ENCODE measurements at regions of chr22 and their contacts with region 1.

Region 1: GRCh38 chr22:46122511-46122971 is 27.8 kb upstream of the PPARA start:
- DNase-seq: peak; percentile 80
- H3K4me3 Mint-ChIP-seq: no peak overlapping the region
- H3K27ac Mint-ChIP-seq: no peak overlapping the region
- H3K4me1 Mint-ChIP-seq: no peaks in the 10 kb centered on the region
- H3K27me3 Mint-ChIP-seq: no peaks in the 10 kb centered on the region

Region 2: DNA sequence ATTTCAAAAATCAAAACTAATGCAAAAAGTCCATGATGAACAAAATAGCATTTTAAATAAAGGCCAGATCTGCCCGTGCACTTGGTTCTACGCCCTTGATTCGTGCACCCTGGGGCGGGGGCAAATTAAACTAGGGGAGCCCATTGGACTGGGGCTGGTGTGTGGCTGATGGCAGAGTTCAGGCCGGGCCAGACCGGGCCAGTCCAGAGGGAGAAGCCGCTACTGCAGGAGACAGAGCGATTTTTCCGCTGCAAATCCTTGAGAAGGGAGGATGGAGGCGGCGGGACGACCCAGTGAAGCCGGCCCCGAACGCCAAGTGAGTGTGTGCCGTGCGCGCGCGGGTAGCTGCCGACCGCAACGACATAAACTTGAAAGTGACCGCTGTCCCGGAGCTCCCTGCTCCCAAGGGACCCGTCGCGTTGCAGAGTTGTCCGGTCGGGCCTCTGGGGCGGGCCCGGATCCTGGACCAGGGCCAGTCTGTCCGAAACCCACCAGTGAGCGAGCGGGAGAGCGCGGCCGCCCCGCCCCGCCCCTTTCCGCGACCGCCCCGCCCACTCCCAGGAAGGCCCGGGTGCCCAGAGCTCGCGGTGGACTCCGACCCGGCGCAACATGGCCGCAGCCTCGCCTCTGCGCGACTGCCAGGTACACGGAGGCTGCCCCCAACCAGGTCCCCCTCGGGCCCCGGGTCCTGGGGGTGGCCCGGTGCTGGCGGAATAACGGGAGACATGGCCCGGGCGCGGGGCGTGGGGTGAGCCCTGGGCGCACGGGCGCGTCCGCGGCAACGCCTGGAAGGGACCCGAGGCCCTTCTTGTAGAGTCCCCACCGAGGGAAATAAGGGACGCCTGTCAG is 145.1 kb after region 1 on chr22 and contains the start of gene TTC38:
- CTCF ChIA-PET with region 1: no interaction called
- intact Hi-C with region 1: no loop called
- DNase-seq: peak; percentile 42
- H3K4me3 Mint-ChIP-seq: peak within 1 kb of the TSS; percentile 85
- H3K27ac Mint-ChIP-seq: no peak within 1 kb of the TSS
- H3K4me1 Mint-ChIP-seq: peaks cover 8% of the 10 kb centered on the region
- H3K27me3 Mint-ChIP-seq: peaks cover 32% of the 10 kb centered on the region
- total RNA-seq, gene TTC38: 6.1 to 7.2 TPM

Region 3: GRCh38 chr22:46309526-46310085 is 187.1 kb after region 1 on chr22:
- CTCF ChIA-PET with region 1: interaction called, 27 read pairs
- intact Hi-C with region 1: loop called (anchors 1 kb)
- DNase-seq: no peak
- H3K4me3 Mint-ChIP-seq: no peak overlapping the region
- H3K27ac Mint-ChIP-seq: no peak overlapping the region
- H3K4me1 Mint-ChIP-seq: peaks cover 2% of the 10 kb centered on the region
- H3K27me3 Mint-ChIP-seq: no peaks in the 10 kb centered on the region

Region 4: DNA sequence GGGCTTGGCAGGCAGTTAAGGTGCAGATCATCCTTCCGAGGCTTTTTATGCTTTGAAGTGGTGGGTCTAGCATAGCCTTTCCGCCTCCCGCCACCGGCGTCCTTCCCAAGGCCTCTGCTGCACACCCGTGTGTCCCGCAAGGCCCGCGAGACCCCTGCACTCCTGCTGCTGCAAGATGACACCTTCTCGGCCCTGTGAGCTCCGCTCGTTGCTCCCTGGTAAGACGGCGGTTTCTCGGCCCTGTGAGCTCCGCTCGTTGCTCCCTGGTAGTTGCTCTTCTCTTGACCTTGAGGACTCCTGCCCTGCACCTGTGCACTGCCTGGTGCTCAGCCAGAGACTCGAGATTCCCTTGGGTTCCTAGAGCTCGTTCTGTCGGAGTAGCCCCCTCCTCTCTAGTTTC is 195.1 kb after region 1 on chr22:
- CTCF ChIA-PET with region 1: interaction called, 27 read pairs
- intact Hi-C with region 1: loop called (anchors 1 kb)
- DNase-seq: no peak
- H3K4me3 Mint-ChIP-seq: no peak overlapping the region
- H3K27ac Mint-ChIP-seq: no peak overlapping the region
- H3K4me1 Mint-ChIP-seq: no peaks in the 10 kb centered on the region
- H3K27me3 Mint-ChIP-seq: no peaks in the 10 kb centered on the region

Region 5: GRCh38 chr22:46346680-46347405 is 224.3 kb after region 1 on chr22:
- CTCF ChIA-PET with region 1: no interaction called
- intact Hi-C with region 1: no loop called
- DNase-seq: no peak
- H3K4me3 Mint-ChIP-seq: no peak overlapping the region
- H3K27ac Mint-ChIP-seq: no peak overlapping the region
- H3K4me1 Mint-ChIP-seq: no peaks in the 10 kb centered on the region
- H3K27me3 Mint-ChIP-seq: no peaks in the 10 kb centered on the region

Measured in activated naive CD4-positive, alpha-beta T cell treated with anti-CD3 and anti-CD28 coated beads for 36 hours (primary cell).